Naive thymus-derived CD4-positive, alpha-beta T cell (primary cell): ENCODE measurements at regions of chr19 and their contacts with region 1.

Region 1: DNA sequence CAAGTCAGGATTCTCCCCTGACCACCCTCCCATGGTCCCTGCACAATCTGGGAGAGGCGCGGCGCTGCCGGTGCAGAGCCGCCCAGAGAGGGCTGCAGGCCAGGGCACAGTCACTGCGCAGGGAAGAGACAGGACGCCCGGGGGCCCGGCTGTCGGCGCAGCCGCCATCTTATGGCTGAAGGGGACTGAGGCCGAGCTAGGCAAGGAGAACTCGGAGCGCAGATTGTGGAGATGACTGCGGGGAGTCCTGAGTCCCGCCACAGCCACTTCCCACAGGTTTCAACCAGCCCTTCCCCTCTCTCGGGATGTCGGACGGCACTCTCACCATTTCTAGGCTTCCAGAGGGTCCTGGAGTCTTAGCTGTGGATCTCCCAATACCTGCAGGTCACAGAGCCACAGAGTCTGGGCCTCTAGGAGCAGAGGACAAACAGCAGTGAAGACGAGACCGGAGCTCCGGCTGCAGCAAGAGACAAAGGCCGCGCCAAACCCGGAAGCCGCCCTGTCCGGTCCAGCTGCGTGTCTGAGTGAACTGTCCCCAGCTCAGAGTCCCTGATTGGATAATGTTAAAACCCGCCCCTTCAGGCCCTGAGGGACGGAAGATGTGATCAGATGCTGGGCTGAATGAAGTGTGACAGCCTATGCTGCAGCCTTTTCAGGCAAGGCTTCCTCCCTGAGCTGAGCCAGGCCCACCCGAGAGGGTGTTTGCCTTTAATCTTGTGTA is at the start of gene ZNF708:
- DNase-seq: peak; percentile 42 to 80 (median 71)
- ATAC-seq: peak; percentile 99
- H3K4me3 ChIP-seq: peak within 1 kb of the TSS; percentile 94
- H3K4me3 Mint-ChIP-seq: peak within 1 kb of the TSS; percentile 93 to 99 (median 97)
- H3K27ac ChIP-seq: peak within 1 kb of the TSS; percentile 92
- H3K27ac Mint-ChIP-seq: peak within 1 kb of the TSS; percentile 96 to 100 (median 99)
- H3K4me1 ChIP-seq: peaks cover 6 to 14% of the 10 kb centered on the region in 2 donors
- H3K4me1 Mint-ChIP-seq: peaks cover 24 to 47% (median 31%) of the 10 kb centered on the region in 7 donors
- H3K27me3 ChIP-seq: no peaks in the 10 kb centered on the region
- H3K27me3 Mint-ChIP-seq: no peaks in the 10 kb centered on the region
- total RNA-seq, gene ZNF708: 21.2 to 48.0 (median 24.2) TPM

Region 2: GRCh38 chr19:20999731-21000352 is 329.2 kb before region 1 on chr19:
- CTCF ChIA-PET with region 1: no interaction called
- POLR2A ChIA-PET with region 1: interaction called, 5 read pairs
- intact Hi-C with region 1: loop called in 1 of 2 experiments (anchors 1 kb)
- DNase-seq: peak; percentile 64 to 92 (median 86)
- ATAC-seq: peak; percentile 100
- H3K4me3 ChIP-seq: peak overlapping the region; percentile 67
- H3K4me3 Mint-ChIP-seq: peak overlapping the region; percentile 76 to 92 (median 85)
- H3K27ac ChIP-seq: no peak overlapping the region
- H3K27ac Mint-ChIP-seq: peak overlapping the region in 5 of 9 donors; percentile 36 to 87 (median 47)
- H3K4me1 ChIP-seq: no peaks in the 10 kb centered on the region
- H3K4me1 Mint-ChIP-seq: peaks cover 5 to 16% (median 7%) of the 10 kb centered on the region in 7 donors
- H3K27me3 ChIP-seq: no peaks in the 10 kb centered on the region
- H3K27me3 Mint-ChIP-seq: no peaks in the 10 kb centered on the region

Region 3: DNA sequence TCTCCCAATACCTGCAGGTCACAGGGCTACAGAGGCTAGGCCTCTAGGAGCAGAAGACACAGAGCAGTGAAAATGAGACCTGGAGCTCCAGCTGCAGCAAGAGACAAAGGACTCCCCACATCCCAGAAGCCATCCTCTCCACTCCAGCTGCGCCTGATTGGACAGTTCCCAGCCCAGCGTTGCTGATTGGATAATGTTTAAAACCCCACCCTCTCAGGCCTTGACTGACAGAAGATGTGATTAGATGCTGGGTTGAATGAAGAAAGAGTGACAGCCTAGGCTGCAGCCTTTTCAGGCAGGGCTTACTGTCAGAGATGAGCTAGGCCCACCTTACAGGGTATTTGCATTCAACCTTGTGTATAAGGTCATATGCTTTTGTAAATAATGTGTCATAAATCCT is 59.2 kb before region 1 on chr19:
- CTCF ChIA-PET with region 1: no interaction called
- POLR2A ChIA-PET with region 1: no interaction called
- intact Hi-C with region 1: no loop called
- DNase-seq: no peak
- ATAC-seq: no peak
- H3K4me3 ChIP-seq: no peak overlapping the region
- H3K4me3 Mint-ChIP-seq: no peak overlapping the region
- H3K27ac ChIP-seq: no peak overlapping the region
- H3K27ac Mint-ChIP-seq: no peak overlapping the region
- H3K4me1 ChIP-seq: no peaks in the 10 kb centered on the region
- H3K4me1 Mint-ChIP-seq: no peaks in the 10 kb centered on the region
- H3K27me3 ChIP-seq: no peaks in the 10 kb centered on the region
- H3K27me3 Mint-ChIP-seq: no peaks in the 10 kb centered on the region

Region 4: DNA sequence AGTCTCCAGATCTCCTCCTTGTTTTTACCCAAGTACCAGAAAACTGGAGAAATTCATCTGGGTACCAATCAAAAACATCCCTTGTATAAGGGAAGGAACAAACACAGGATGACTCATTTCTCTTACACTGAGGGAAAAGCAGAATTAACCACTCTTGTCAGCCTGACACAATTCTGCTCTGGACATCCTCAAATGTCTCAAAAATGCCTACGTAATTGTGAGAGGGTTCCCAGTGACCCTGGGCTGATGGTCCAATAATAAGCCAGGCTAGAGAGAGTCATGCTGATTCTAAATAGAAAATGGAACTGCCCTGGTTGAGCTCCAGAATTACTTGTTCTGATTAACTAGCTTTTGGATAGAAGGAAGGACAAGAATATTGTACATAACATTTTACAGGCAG is 14.4 kb before region 1 on chr19:
- CTCF ChIA-PET with region 1: no interaction called
- POLR2A ChIA-PET with region 1: interaction called, 12 read pairs
- intact Hi-C with region 1: no loop called
- DNase-seq: no peak
- ATAC-seq: peak; percentile 72
- H3K4me3 ChIP-seq: no peak overlapping the region
- H3K4me3 Mint-ChIP-seq: peak overlapping the region in 2 of 10 donors; percentile 14 to 32
- H3K27ac ChIP-seq: no peak overlapping the region
- H3K27ac Mint-ChIP-seq: peak overlapping the region in 3 of 9 donors; percentile 43 to 76 (median 69)
- H3K4me1 ChIP-seq: no peaks in the 10 kb centered on the region
- H3K4me1 Mint-ChIP-seq: peaks cover 7 to 58% (median 34%) of the 10 kb centered on the region in 7 donors
- H3K27me3 ChIP-seq: no peaks in the 10 kb centered on the region
- H3K27me3 Mint-ChIP-seq: no peaks in the 10 kb centered on the region

Region 5: GRCh38 chr19:21383980-21384582 is 55.0 kb after region 1 on chr19:
- CTCF ChIA-PET with region 1: no interaction called
- POLR2A ChIA-PET with region 1: no interaction called
- intact Hi-C with region 1: no loop called
- DNase-seq: no peak
- ATAC-seq: no peak
- H3K4me3 ChIP-seq: no peak overlapping the region
- H3K4me3 Mint-ChIP-seq: no peak overlapping the region
- H3K27ac ChIP-seq: no peak overlapping the region
- H3K27ac Mint-ChIP-seq: no peak overlapping the region
- H3K4me1 ChIP-seq: no peaks in the 10 kb centered on the region
- H3K4me1 Mint-ChIP-seq: no peaks in the 10 kb centered on the region
- H3K27me3 ChIP-seq: no peaks in the 10 kb centered on the region
- H3K27me3 Mint-ChIP-seq: no peaks in the 10 kb centered on the region

Region 6: DNA sequence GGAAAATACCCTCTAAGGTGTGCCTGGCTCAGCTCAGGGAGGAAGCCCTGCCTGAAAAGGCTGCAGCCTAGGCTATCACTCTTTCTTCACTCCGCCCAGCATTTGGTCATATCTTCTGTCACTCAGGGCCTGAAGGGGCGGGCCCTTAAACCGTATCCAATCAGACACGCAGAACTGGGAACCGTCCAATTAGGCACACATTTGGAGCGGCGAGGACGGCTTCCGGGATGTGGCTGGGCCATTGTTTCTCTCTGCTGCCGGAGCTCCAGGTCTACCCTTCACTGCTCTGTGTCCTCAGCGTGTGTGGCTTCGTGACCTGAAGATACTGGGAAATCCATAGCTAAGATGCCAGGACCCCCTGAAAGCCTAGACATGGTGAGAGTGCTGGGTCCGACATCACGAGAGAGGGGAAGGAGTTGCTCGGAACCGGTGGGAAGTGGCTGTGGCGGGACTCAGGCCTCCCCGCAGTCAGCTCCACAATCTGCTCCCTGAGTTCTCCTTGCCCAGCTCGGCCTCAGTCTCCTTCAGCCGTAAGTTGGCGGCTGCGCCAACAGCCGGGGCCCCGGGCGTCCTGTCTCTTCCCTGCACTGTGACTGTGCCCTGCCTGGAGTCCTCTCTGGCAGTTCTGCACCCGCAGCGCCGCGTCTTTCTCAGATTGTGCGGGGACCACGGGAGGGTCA is 68.0 kb after region 1 on chr19 and contains the start of gene ZNF493:
- CTCF ChIA-PET with region 1: no interaction called
- POLR2A ChIA-PET with region 1: interaction called, 41 read pairs
- intact Hi-C with region 1: loop called (anchors 1 kb)
- DNase-seq: peak; percentile 76 to 95 (median 91)
- ATAC-seq: peak; percentile 100
- H3K4me3 ChIP-seq: peak within 1 kb of the TSS; percentile 80
- H3K4me3 Mint-ChIP-seq: peak within 1 kb of the TSS; percentile 90 to 99 (median 97)
- H3K27ac ChIP-seq: peak within 1 kb of the TSS; percentile 77
- H3K27ac Mint-ChIP-seq: peak within 1 kb of the TSS; percentile 68 to 97 (median 92)
- H3K4me1 ChIP-seq: peaks cover 6 to 11% of the 10 kb centered on the region in 2 donors
- H3K4me1 Mint-ChIP-seq: peaks cover 19 to 48% (median 32%) of the 10 kb centered on the region in 7 donors
- H3K27me3 ChIP-seq: no peaks in the 10 kb centered on the region
- H3K27me3 Mint-ChIP-seq: peaks cover 0 to 4% (median 0%) of the 10 kb centered on the region in 5 donors
- total RNA-seq, gene ZNF493: 19.7 to 78.3 (median 34.6) TPM

Region 7: GRCh38 chr19:21586311-21587116 is 257.5 kb after region 1 on chr19:
- CTCF ChIA-PET with region 1: no interaction called
- POLR2A ChIA-PET with region 1: interaction called, 3 read pairs
- intact Hi-C with region 1: loop called in 1 of 2 experiments (anchors 10 kb)
- DNase-seq: peak in 6 of 9 donors; percentile 11 to 43 (median 34)
- ATAC-seq: peak; percentile 69
- H3K4me3 ChIP-seq: peak overlapping the region; percentile 39
- H3K4me3 Mint-ChIP-seq: peak overlapping the region; percentile 47 to 91 (median 82)
- H3K27ac ChIP-seq: peak overlapping the region; percentile 48
- H3K27ac Mint-ChIP-seq: peak overlapping the region in 5 of 9 donors; percentile 73 to 88 (median 80)
- H3K4me1 ChIP-seq: peaks cover 0 to 12% of the 10 kb centered on the region in 2 donors
- H3K4me1 Mint-ChIP-seq: peaks cover 0 to 50% (median 19%) of the 10 kb centered on the region in 7 donors
- H3K27me3 ChIP-seq: no peaks in the 10 kb centered on the region
- H3K27me3 Mint-ChIP-seq: peaks cover 0 to 27% (median 7%) of the 10 kb centered on the region in 5 donors

Region 8: GRCh38 chr19:21851596-21852345 is 522.7 kb after region 1 on chr19:
- CTCF ChIA-PET with region 1: no interaction called
- POLR2A ChIA-PET with region 1: interaction called, 4 read pairs
- intact Hi-C with region 1: loop called in 1 of 2 experiments (anchors 10 kb)
- DNase-seq: peak; percentile 71 to 90 (median 88)
- ATAC-seq: peak; percentile 99
- H3K4me3 ChIP-seq: peak overlapping the region; percentile 98
- H3K4me3 Mint-ChIP-seq: peak overlapping the region; percentile 89 to 96 (median 92)
- H3K27ac ChIP-seq: peak overlapping the region; percentile 90
- H3K27ac Mint-ChIP-seq: peak overlapping the region; percentile 68 to 96 (median 92)
- H3K4me1 ChIP-seq: peaks cover 6 to 10% of the 10 kb centered on the region in 2 donors
- H3K4me1 Mint-ChIP-seq: peaks cover 8 to 34% (median 27%) of the 10 kb centered on the region in 7 donors
- H3K27me3 ChIP-seq: no peaks in the 10 kb centered on the region
- H3K27me3 Mint-ChIP-seq: peaks cover 0 to 1% (median 0%) of the 10 kb centered on the region in 5 donors